Mucosa of descending colon (tissue), 3 donors: ENCODE measurements at regions of chr1 and their contacts with region 1.

Region 1: GRCh38 chr1:37486680-37487618 is 12.6 kb downstream of the ZC3H12A start:
- DNase-seq: peak; percentile 81 to 90 (median 88)
- ATAC-seq: peak; percentile 80
- H3K4me3 ChIP-seq: no peak overlapping the region
- H3K4me1 ChIP-seq: peaks cover 12% of the 10 kb centered on the region
- CTCF ChIP-seq: peak; percentile 99

Region 2: DNA sequence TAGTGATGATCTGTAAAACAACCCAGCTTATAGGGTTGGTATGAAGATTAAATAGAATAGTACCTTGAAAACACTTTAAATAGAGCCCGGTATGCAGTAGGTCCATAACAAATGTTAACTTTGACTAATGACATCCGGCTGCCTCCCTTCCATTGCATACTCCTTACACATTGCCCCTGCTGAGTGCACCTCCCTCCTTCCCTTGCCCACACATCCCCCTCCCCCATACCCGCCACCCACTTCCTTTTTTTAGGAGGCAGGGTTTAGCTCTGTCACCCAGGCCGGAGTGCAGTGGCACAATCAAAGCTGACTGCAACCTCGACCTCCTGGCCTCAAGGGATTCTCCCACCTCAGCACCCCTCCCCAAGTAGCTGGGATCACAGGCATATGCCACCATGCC is 37.0 kb before region 1 on chr1:
- intact Hi-C with region 1: loop called (anchors 5 kb)
- DNase-seq: peak in 1 of 3 donors; percentile 16
- ATAC-seq: no peak
- H3K4me3 ChIP-seq: no peak overlapping the region
- H3K4me1 ChIP-seq: peaks cover 3% of the 10 kb centered on the region
- CTCF ChIP-seq: no peak

Region 3: DNA sequence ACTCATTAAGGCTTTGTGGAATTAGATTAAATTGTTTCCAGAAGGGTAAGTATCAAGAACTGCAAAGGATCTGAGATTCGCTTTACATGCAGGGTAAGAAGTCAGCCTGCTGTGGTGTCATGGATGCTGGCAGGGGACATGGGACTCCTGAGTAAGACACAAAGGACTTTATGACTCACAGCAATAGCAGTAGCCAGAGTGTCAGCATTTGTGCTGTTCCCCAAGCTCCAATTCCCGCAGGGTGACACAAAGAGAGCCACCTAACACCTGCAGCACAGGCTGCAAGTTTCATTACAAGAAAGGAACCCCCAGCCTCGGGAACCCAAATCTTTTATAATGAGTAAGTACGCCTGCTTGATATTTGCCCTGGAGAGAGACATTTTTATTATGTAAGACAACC is 857.8 kb after region 1 on chr1:
- intact Hi-C with region 1: no loop called
- DNase-seq: no peak
- ATAC-seq: no peak
- H3K4me3 ChIP-seq: no peak overlapping the region
- H3K4me1 ChIP-seq: no peaks in the 10 kb centered on the region
- CTCF ChIP-seq: no peak